CD4-positive, alpha-beta T cell (primary cell): ENCODE measurements at regions of chrX and their contacts with region 1.

Region 1: GRCh38 chrX:75603833-75604232 is 81.0 kb upstream of the ZDHHC15 start:
- DNase-seq: peak in 3 of 14 experiments; percentile 21 to 42 (median 30)
- ATAC-seq: no peak
- H3K4me3 ChIP-seq: no peak overlapping the region
- H3K4me3 Mint-ChIP-seq: no peak overlapping the region
- H3K27ac ChIP-seq: no peak overlapping the region
- H3K27ac Mint-ChIP-seq: no peak overlapping the region
- H3K4me1 ChIP-seq: no peaks in the 10 kb centered on the region
- H3K4me1 Mint-ChIP-seq: no peaks in the 10 kb centered on the region
- H3K27me3 ChIP-seq: no peaks in the 10 kb centered on the region
- H3K27me3 Mint-ChIP-seq: no peaks in the 10 kb centered on the region
- CTCF ChIP-seq: peak; percentile 60

Region 2: DNA sequence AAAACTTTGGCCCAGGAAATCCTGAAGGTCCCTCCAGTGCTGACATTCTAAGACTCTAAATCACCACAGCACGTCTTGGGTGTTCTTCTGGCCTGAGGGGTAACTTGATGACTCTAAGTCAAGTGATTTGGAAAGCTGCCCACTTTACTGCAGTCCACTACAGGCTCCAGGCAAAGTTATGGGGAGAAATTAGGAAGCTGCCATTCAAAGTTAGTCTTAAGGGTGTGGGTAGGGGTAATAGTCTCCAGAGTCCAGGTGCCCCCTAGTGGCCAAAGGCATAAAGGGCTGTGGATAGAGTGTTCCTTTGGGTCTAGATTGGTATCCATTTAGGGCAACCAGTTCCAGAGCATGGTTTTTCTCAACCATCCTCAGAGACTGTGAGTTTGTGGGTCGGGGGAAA is 1221.2 kb before region 1 on chrX:
- CTCF ChIA-PET with region 1: no interaction called
- POLR2A ChIA-PET with region 1: no interaction called
- intact Hi-C with region 1: loop called in 1 of 2 experiments (anchors 10 kb)
- DNase-seq: peak; percentile 16 to 69 (median 42)
- ATAC-seq: peak; percentile 49
- H3K4me3 ChIP-seq: no peak overlapping the region
- H3K4me3 Mint-ChIP-seq: no peak overlapping the region
- H3K27ac ChIP-seq: no peak overlapping the region
- H3K27ac Mint-ChIP-seq: no peak overlapping the region
- H3K4me1 ChIP-seq: no peaks in the 10 kb centered on the region
- H3K4me1 Mint-ChIP-seq: no peaks in the 10 kb centered on the region
- H3K27me3 ChIP-seq: peaks cover 0 to 4% of the 10 kb centered on the region in 2 experiments
- H3K27me3 Mint-ChIP-seq: peaks cover 4% of the 10 kb centered on the region
- CTCF ChIP-seq: peak; percentile 58

Region 3: GRCh38 chrX:74492720-74493201 is 1111.1 kb before region 1 on chrX:
- CTCF ChIA-PET with region 1: no interaction called
- POLR2A ChIA-PET with region 1: no interaction called
- intact Hi-C with region 1: loop called in 1 of 2 experiments (anchors 10 kb)
- DNase-seq: peak in 8 of 14 experiments; percentile 0 to 30 (median 8)
- ATAC-seq: no peak
- H3K4me3 ChIP-seq: no peak overlapping the region
- H3K4me3 Mint-ChIP-seq: no peak overlapping the region
- H3K27ac ChIP-seq: no peak overlapping the region
- H3K27ac Mint-ChIP-seq: no peak overlapping the region
- H3K4me1 ChIP-seq: no peaks in the 10 kb centered on the region
- H3K4me1 Mint-ChIP-seq: no peaks in the 10 kb centered on the region
- H3K27me3 ChIP-seq: no peaks in the 10 kb centered on the region
- H3K27me3 Mint-ChIP-seq: no peaks in the 10 kb centered on the region
- CTCF ChIP-seq: no peak

Region 4: GRCh38 chrX:75038925-75039324 is 564.9 kb before region 1 on chrX:
- CTCF ChIA-PET with region 1: no interaction called
- POLR2A ChIA-PET with region 1: no interaction called
- intact Hi-C with region 1: loop called in 1 of 2 experiments (anchors 5 kb)
- DNase-seq: peak in 3 of 14 experiments; percentile 10 to 17 (median 15)
- ATAC-seq: no peak
- H3K4me3 ChIP-seq: no peak overlapping the region
- H3K4me3 Mint-ChIP-seq: no peak overlapping the region
- H3K27ac ChIP-seq: no peak overlapping the region
- H3K27ac Mint-ChIP-seq: no peak overlapping the region
- H3K4me1 ChIP-seq: no peaks in the 10 kb centered on the region
- H3K4me1 Mint-ChIP-seq: no peaks in the 10 kb centered on the region
- H3K27me3 ChIP-seq: no peaks in the 10 kb centered on the region
- H3K27me3 Mint-ChIP-seq: no peaks in the 10 kb centered on the region
- CTCF ChIP-seq: no peak

Region 5: GRCh38 chrX:75544786-75545185 is 59.0 kb before region 1 on chrX:
- CTCF ChIA-PET with region 1: no interaction called
- POLR2A ChIA-PET with region 1: no interaction called
- intact Hi-C with region 1: no loop called
- DNase-seq: no peak
- ATAC-seq: no peak
- H3K4me3 ChIP-seq: no peak overlapping the region
- H3K4me3 Mint-ChIP-seq: no peak overlapping the region
- H3K27ac ChIP-seq: no peak overlapping the region
- H3K27ac Mint-ChIP-seq: no peak overlapping the region
- H3K4me1 ChIP-seq: no peaks in the 10 kb centered on the region
- H3K4me1 Mint-ChIP-seq: no peaks in the 10 kb centered on the region
- H3K27me3 ChIP-seq: no peaks in the 10 kb centered on the region
- H3K27me3 Mint-ChIP-seq: no peaks in the 10 kb centered on the region
- CTCF ChIP-seq: no peak

Region 6: GRCh38 chrX:76127341-76127740 is 523.5 kb after region 1 on chrX:
- CTCF ChIA-PET with region 1: no interaction called
- POLR2A ChIA-PET with region 1: no interaction called
- intact Hi-C with region 1: no loop called
- DNase-seq: peak in 4 of 14 experiments; percentile 9 to 20 (median 12)
- ATAC-seq: no peak
- H3K4me3 ChIP-seq: no peak overlapping the region
- H3K4me3 Mint-ChIP-seq: no peak overlapping the region
- H3K27ac ChIP-seq: no peak overlapping the region
- H3K27ac Mint-ChIP-seq: no peak overlapping the region
- H3K4me1 ChIP-seq: no peaks in the 10 kb centered on the region
- H3K4me1 Mint-ChIP-seq: no peaks in the 10 kb centered on the region
- H3K27me3 ChIP-seq: no peaks in the 10 kb centered on the region
- H3K27me3 Mint-ChIP-seq: peaks cover 9% of the 10 kb centered on the region
- CTCF ChIP-seq: no peak